Activated CD4-positive, alpha-beta T cell treated with anti-CD3 and anti-CD28 coated beads for 36 hours (primary cell): ENCODE measurements at regions of chr2 and their contacts with region 1.

Region 1: DNA sequence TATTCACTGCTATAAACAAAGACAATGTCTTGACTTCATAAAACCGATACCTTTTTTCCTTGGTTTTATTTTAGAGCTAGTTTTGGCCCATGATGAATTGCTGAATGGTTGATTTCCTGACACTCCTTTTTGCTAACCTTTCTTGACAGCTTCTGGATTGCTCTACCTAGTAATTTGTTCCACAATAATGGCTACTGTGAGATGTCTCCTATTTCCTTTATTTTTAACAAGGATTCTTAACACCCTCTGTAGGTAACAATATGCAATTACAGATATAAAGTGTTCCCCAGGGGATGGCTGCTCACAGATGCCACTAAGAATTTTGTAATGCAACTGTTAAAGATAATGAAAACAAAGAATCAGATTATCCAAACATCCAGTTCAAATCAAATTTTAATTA is 100.8 kb upstream of the ATP5MC3 start:
- DNase-seq: no peak
- ATAC-seq: peak; percentile 91
- H3K4me3 Mint-ChIP-seq: no peak overlapping the region
- H3K27ac Mint-ChIP-seq: no peak overlapping the region
- H3K4me1 Mint-ChIP-seq: peaks cover 4% of the 10 kb centered on the region
- H3K27me3 Mint-ChIP-seq: peaks cover 2% of the 10 kb centered on the region

Region 2: DNA sequence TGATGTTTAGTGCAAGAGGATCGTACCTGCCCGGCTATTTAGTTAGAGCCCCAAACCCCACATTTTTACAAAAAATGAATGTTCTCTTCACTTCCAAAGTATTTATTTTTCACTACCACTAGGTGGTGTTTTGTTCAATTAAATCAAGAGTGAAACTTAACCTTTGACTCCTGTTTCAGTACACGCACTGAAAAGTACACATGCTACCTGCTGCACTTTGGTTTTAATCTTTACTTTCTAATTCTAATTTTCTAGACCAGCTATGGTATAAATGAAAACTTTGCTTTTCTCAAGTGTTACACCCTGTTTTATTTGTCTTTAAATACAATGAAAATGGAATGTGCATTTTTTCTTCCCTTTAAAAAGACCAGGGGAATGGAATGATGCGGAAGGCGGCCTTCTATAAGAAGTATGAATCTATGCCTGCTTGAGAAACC is 245.7 kb before region 1 on chr2:
- CTCF ChIA-PET with region 1: no interaction called
- POLR2A ChIA-PET with region 1: no interaction called
- intact Hi-C with region 1: loop called (anchors 1 kb)
- DNase-seq: no peak
- ATAC-seq: peak; percentile 60
- H3K4me3 Mint-ChIP-seq: no peak overlapping the region
- H3K27ac Mint-ChIP-seq: peak overlapping the region; percentile 64
- H3K4me1 Mint-ChIP-seq: peaks cover 9% of the 10 kb centered on the region
- H3K27me3 Mint-ChIP-seq: no peaks in the 10 kb centered on the region

Region 3: DNA sequence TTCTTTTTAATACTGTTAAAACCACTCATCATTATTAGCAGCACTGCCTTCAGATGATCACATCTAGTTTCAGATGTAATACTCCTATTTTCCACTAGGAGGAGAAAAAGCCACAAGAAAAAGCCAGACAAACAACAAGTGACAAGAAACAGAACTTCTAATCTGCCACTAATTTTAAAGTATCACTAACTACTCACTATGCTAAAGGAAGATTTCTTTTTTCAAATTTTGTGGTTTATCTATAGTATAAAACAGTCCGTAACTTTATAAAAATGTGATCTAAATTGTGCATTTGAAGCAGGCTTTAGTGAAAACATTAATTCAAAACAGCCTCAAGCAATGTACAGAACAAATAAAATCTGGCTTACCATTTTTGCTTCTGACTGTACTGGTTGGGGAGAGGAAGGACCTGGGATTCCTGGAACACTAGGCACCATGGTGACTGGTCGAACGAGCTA is 171.1 kb before region 1 on chr2:
- CTCF ChIA-PET with region 1: interaction called, 4 read pairs
- POLR2A ChIA-PET with region 1: no interaction called
- intact Hi-C with region 1: loop called (anchors 1 kb)
- DNase-seq: no peak
- ATAC-seq: peak; percentile 44
- H3K4me3 Mint-ChIP-seq: no peak overlapping the region
- H3K27ac Mint-ChIP-seq: no peak overlapping the region
- H3K4me1 Mint-ChIP-seq: peaks cover 5% of the 10 kb centered on the region
- H3K27me3 Mint-ChIP-seq: no peaks in the 10 kb centered on the region

Region 4: GRCh38 chr2:175309799-175310198 is 27.5 kb after region 1 on chr2:
- CTCF ChIA-PET with region 1: no interaction called
- POLR2A ChIA-PET with region 1: no interaction called
- intact Hi-C with region 1: no loop called
- DNase-seq: peak; percentile 39
- ATAC-seq: no peak
- H3K4me3 Mint-ChIP-seq: no peak overlapping the region
- H3K27ac Mint-ChIP-seq: no peak overlapping the region
- H3K4me1 Mint-ChIP-seq: no peaks in the 10 kb centered on the region
- H3K27me3 Mint-ChIP-seq: peaks cover 12% of the 10 kb centered on the region

Region 5: DNA sequence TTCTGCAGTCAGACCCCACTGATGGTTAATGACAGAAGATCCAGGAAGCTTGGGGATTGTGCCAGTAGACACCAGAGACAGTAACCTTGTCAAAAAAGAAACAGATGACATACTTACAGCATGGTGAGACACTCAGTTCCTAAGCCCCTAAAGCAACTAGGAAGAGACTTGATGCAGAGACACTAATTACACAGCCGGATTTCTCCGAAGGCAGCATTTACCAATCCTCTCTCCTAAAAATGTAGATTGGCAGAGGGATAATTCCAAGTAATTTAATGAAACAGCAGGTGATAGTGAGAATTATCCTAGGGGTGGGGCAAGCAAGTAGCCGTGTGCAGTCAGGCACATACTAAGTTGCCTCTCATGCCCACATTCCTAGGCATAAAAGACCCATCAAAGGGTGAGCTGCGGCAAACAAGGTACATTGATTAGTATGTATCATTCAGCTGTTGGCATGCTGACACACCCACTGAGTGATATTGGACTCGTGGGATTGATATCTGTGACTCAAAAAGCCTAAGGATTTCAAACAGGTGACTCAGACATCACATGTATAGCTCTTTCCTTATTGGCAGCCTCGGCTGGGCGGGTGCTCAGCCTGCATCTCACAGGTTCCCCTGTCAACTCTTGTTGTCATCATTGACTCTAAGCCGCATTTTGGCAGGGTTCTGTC is 195.9 kb after region 1 on chr2:
- CTCF ChIA-PET with region 1: no interaction called
- POLR2A ChIA-PET with region 1: no interaction called
- intact Hi-C with region 1: no loop called
- DNase-seq: no peak
- ATAC-seq: no peak
- H3K4me3 Mint-ChIP-seq: no peak overlapping the region
- H3K27ac Mint-ChIP-seq: no peak overlapping the region
- H3K4me1 Mint-ChIP-seq: no peaks in the 10 kb centered on the region
- H3K27me3 Mint-ChIP-seq: peaks cover 3% of the 10 kb centered on the region